ENCODE measurements at regions of chr5 and their contacts with region 1.

Region 1: DNA sequence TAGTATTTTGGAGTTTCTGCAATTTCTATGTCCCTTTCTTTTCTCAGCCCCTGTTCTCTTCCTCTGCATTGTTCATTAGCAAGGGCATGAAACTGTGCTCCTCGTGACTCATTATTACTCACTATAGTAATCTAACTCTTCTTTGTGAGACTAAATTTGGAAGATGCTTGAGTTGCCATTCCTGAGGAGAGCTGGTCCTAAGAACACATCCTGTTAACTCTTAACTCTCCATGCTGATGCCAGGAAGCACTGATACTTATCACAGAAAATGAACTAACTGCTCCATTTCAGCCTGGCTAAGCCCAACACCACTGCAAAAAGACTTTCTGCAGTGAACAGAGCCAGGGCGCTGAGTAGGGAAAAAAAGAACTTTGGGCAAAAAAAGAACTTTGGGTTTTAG is 10.6 kb upstream of the CSNK1A1 start:
- DNase-seq: no peak
- H3K4me3 Mint-ChIP-seq: no peak overlapping the region
- H3K27ac Mint-ChIP-seq: no peak overlapping the region
- H3K4me1 Mint-ChIP-seq: peaks cover 24% of the 10 kb centered on the region
- H3K27me3 Mint-ChIP-seq: no peaks in the 10 kb centered on the region

Region 2: GRCh38 chr5:149381987-149382340 is 179.9 kb before region 1 on chr5:
- CTCF ChIA-PET with region 1: interaction called, 17 read pairs
- POLR2A ChIA-PET with region 1: interaction called, 5 read pairs
- DNase-seq: peak; percentile 75
- H3K4me3 Mint-ChIP-seq: no peak overlapping the region
- H3K27ac Mint-ChIP-seq: no peak overlapping the region
- H3K4me1 Mint-ChIP-seq: no peaks in the 10 kb centered on the region
- H3K27me3 Mint-ChIP-seq: peaks cover 1% of the 10 kb centered on the region

Region 3: DNA sequence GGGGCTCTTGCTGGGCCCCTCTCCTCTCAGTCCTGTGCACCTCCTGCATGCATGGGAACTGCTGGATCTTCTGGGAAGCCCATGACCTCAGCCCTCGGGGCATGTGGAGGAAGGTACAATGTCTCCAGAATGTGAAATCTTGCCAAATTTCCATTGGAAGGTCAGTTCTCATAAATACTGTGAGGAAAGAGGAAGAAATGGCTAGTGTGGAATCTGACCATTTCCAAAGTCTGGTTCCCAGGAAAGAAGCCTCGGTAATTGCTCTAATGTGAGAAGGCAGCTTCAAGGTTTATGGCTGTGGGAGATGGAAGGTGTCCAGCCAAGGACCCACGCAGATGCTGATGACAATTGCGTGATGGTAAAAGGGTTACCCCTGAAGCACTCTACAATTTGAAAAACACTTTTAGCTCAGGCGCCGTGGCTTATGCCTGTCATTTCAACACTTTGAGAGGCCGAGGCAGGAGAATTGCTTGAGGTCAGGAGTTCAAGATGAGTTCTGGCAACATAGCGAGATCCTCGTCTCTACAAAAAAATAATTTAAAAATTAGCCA is 174.7 kb before region 1 on chr5:
- CTCF ChIA-PET with region 1: interaction called, 17 read pairs
- POLR2A ChIA-PET with region 1: interaction called, 5 read pairs
- DNase-seq: no peak
- H3K4me3 Mint-ChIP-seq: no peak overlapping the region
- H3K27ac Mint-ChIP-seq: no peak overlapping the region
- H3K4me1 Mint-ChIP-seq: peaks cover 2% of the 10 kb centered on the region
- H3K27me3 Mint-ChIP-seq: peaks cover 6% of the 10 kb centered on the region

Region 4: DNA sequence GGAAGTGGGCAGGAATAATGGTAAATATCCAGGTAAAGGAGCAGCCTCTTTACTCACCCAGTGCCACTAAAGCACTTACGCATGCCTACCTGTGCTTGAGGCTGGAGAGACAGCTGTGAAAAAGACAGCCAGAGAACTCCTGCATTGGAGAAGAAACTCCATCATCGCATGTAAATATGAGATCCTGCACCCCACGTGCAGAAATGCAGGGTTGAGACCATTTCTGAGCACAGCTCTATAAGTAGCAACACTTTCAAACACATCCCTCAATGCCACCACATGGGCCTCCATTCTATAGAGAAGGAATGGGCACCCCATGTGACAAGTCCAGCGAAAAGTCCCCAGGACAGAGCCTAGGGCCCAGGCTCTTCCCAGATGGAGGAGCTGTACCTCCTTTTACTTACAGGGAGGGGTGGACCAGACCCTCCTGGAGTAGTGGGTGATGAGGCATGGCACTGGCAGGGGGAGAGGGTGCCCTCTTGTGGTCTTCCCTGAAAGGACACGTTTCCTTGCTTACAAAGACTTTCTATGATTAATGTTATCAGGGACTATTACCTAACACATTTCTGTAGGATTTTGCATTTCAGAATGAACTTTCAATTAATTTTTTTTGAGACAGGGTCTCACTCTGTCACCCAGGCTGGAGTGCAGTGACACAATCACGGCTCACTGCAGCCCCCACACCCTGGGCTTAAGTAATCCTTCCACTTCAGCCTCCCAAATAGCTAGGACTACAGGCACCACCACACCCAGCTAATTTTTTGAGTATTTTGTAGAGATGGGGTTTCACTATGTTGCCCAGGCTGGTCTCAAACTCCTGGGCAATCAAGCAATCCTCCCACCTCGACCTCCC is 127.5 kb before region 1 on chr5:
- CTCF ChIA-PET with region 1: interaction called, 34 read pairs
- POLR2A ChIA-PET with region 1: no interaction called
- DNase-seq: peak; percentile 57
- H3K4me3 Mint-ChIP-seq: no peak overlapping the region
- H3K27ac Mint-ChIP-seq: no peak overlapping the region
- H3K4me1 Mint-ChIP-seq: peaks cover 45% of the 10 kb centered on the region
- H3K27me3 Mint-ChIP-seq: peaks cover 5% of the 10 kb centered on the region

Region 5: GRCh38 chr5:149442563-149443182 is 119.2 kb before region 1 on chr5:
- CTCF ChIA-PET with region 1: interaction called, 34 read pairs
- POLR2A ChIA-PET with region 1: no interaction called
- DNase-seq: peak; percentile 75
- H3K4me3 Mint-ChIP-seq: no peak overlapping the region
- H3K27ac Mint-ChIP-seq: peak overlapping the region; percentile 24
- H3K4me1 Mint-ChIP-seq: peaks cover 34% of the 10 kb centered on the region
- H3K27me3 Mint-ChIP-seq: no peaks in the 10 kb centered on the region

Region 6: GRCh38 chr5:149618581-149619251 is 56.9 kb after region 1 on chr5:
- CTCF ChIA-PET with region 1: interaction called, 17 read pairs
- POLR2A ChIA-PET with region 1: no interaction called
- DNase-seq: peak; percentile 45
- H3K4me3 Mint-ChIP-seq: no peak overlapping the region
- H3K27ac Mint-ChIP-seq: no peak overlapping the region
- H3K4me1 Mint-ChIP-seq: peaks cover 27% of the 10 kb centered on the region
- H3K27me3 Mint-ChIP-seq: peaks cover 4% of the 10 kb centered on the region